Right cardiac atrium (tissue), 5 donors: ENCODE measurements at regions of chr10 and their contacts with region 1.

Region 1: GRCh38 chr10:100046021-100046486 is 35.6 kb downstream of the CPN1 start:
- DNase-seq: peak; percentile 90 to 96 (median 93)
- ATAC-seq: peak; percentile 74 to 75
- H3K4me3 ChIP-seq: no peak overlapping the region
- H3K27ac ChIP-seq: no peak overlapping the region
- H3K4me1 ChIP-seq: peaks cover 4% of the 10 kb centered on the region
- H3K27me3 ChIP-seq: no peaks in the 10 kb centered on the region

Region 2: DNA sequence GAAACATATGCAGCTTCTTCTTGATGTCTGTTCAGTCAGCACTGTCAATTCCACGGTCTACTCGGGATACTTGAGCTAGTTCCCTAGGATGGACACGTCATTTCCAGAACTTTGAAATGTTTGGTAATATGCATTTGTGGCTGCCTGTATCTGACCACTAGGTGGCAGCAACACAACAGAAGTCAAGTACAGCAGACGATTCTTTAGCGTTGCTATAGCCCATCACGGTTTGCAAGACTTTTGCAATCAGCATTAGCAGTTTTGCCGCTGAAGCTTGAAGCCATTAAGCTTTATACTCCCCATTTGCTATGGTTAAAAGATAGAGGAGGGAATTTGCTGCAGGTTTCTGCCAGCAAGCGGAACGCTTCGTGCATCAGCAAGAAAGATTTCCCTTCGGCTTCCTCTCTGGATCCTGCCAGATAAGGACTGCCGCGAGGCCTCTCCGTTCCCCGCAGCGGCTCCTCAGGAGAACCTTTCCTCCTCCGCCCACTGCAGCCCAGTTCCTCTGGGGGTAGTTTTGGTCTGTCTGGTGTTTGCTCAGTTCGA is 200.1 kb before region 1 on chr10:
- intact Hi-C with region 1: loop called (anchors 5 kb)
- DNase-seq: peak; percentile 67 to 81 (median 68)
- ATAC-seq: peak; percentile 91 to 95
- H3K4me3 ChIP-seq: peak overlapping the region; percentile 31
- H3K27ac ChIP-seq: no peak overlapping the region
- H3K4me1 ChIP-seq: no peaks in the 10 kb centered on the region
- H3K27me3 ChIP-seq: no peaks in the 10 kb centered on the region

Region 3: GRCh38 chr10:100148353-100149211 is 102.5 kb after region 1 on chr10:
- intact Hi-C with region 1: no loop called
- DNase-seq: no peak
- ATAC-seq: no peak
- H3K4me3 ChIP-seq: no peak overlapping the region
- H3K27ac ChIP-seq: no peak overlapping the region
- H3K4me1 ChIP-seq: no peaks in the 10 kb centered on the region
- H3K27me3 ChIP-seq: no peaks in the 10 kb centered on the region